Activated CD4-positive, alpha-beta memory T cell treated with anti-CD3 and anti-CD28 coated beads for 36 hours (primary cell): ENCODE measurements at regions of chr18 and their contacts with region 1.

Region 1: DNA sequence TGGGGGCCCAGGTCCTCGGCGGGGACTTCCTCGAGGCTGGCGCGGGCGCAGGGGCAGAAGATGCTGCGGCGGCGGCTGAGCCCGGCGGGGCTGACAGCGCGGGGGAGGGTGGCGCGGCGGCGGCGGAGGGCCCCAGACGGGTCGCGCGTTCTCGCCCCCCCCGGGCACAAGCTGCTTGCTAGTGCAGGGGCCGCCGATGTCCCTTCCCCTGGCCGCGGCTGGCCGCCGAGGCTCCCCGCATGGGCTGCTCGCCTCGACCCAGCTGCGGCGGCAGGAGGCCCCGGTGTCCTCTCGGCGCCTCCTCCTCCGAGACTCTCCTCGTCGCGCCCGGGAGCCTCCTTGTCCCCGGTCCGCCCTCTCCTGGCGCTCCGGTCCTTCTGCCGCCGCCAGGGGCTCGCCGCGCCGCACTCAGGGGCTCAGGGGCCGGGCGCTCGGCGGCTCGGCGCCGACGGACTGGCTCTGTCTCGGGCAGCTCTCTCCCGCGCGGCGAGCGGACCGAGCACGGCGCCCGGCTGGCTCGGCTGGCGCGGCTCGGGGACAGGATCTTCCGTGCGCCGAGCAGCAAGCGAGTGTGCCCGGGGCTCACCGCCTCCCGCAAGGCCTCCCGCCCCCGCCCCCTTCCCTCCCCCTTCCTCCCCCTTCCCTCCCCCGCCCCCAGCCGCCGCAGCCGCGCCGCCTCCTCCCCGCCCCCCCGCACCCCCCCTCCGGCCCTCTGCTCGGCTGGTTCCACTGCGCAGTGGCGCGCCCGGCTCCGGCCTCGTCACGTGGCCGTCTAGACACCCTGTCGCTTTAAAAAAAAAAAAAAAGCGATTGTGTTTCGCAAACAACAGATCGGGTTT is 902 bp upstream of the SMAD7 start:
- DNase-seq: peak; percentile 82
- H3K4me3 Mint-ChIP-seq: peak overlapping the region; percentile 85
- H3K27ac Mint-ChIP-seq: peak overlapping the region; percentile 76
- H3K4me1 Mint-ChIP-seq: peaks cover 32% of the 10 kb centered on the region
- H3K27me3 Mint-ChIP-seq: no peaks in the 10 kb centered on the region

Region 2: GRCh38 chr18:48777026-48777743 is 174.5 kb before region 1 on chr18:
- CTCF ChIA-PET with region 1: interaction called, 13 read pairs
- POLR2A ChIA-PET with region 1: no interaction called
- intact Hi-C with region 1: loop called (anchors 2 kb)
- DNase-seq: peak; percentile 80
- H3K4me3 Mint-ChIP-seq: no peak overlapping the region
- H3K27ac Mint-ChIP-seq: no peak overlapping the region
- H3K4me1 Mint-ChIP-seq: peaks cover 7% of the 10 kb centered on the region
- H3K27me3 Mint-ChIP-seq: no peaks in the 10 kb centered on the region

Region 3: DNA sequence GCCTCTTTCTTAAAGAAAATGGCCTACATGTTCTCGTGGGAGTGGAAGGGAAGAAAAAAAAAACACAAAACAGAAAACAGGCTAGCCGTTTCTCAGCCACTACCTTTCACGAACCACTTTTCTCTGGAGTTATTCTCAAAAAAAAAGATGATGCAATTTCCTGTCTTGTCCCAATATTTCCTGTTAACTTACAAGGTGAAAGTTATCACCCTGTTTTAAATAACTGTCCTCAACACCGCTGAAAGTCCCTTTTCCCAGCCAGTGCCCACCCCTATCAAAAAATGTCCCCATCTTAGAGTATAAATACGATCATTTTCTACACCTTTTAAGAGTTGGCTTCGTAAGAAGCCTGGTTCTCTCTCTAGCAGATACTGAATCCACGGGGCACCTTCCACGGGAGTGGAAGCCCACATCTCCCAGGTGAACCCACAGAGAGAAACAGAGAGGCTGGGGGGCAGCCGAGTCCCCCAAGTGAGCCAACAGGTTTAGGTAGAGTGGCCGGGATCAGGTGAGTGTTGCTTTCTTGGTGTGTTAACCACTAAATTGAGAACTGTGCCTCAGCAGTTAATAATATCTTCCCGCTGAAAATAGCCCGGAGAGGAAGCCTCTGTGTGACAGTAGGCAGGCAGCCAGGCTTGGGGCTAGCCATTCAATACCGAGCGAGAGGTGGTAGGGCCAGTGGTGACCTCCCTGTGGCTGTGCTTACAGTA is 16.8 kb before region 1 on chr18:
- CTCF ChIA-PET with region 1: interaction called, 6 read pairs
- POLR2A ChIA-PET with region 1: interaction called, 24 read pairs
- intact Hi-C with region 1: loop called (anchors 1 kb)
- DNase-seq: no peak
- H3K4me3 Mint-ChIP-seq: peak overlapping the region; percentile 40
- H3K27ac Mint-ChIP-seq: peak overlapping the region; percentile 76
- H3K4me1 Mint-ChIP-seq: peaks cover 89% of the 10 kb centered on the region
- H3K27me3 Mint-ChIP-seq: no peaks in the 10 kb centered on the region

Region 4: GRCh38 chr18:48975649-48976204 is 24.1 kb after region 1 on chr18:
- CTCF ChIA-PET with region 1: no interaction called
- POLR2A ChIA-PET with region 1: interaction called, 4 read pairs
- intact Hi-C with region 1: loop called (anchors 2 kb)
- DNase-seq: peak; percentile 72
- H3K4me3 Mint-ChIP-seq: no peak overlapping the region
- H3K27ac Mint-ChIP-seq: no peak overlapping the region
- H3K4me1 Mint-ChIP-seq: peaks cover 10% of the 10 kb centered on the region
- H3K27me3 Mint-ChIP-seq: peaks cover 13% of the 10 kb centered on the region

Region 5: GRCh38 chr18:49813319-49814146 is 861.9 kb after region 1 on chr18 and contains the start of gene ACAA2:
- CTCF ChIA-PET with region 1: no interaction called
- POLR2A ChIA-PET with region 1: no interaction called
- intact Hi-C with region 1: loop called (anchors 10 kb)
- DNase-seq: peak; percentile 90
- H3K4me3 Mint-ChIP-seq: peak within 1 kb of the TSS; percentile 91
- H3K27ac Mint-ChIP-seq: peak within 1 kb of the TSS; percentile 95
- H3K4me1 Mint-ChIP-seq: peaks cover 45% of the 10 kb centered on the region
- H3K27me3 Mint-ChIP-seq: no peaks in the 10 kb centered on the region
- total RNA-seq, gene ACAA2: 77.9 to 78.4 TPM